ENCODE measurements at regions of chr6 and their contacts with region 1.

Region 1: GRCh38 chr6:87393022-87393622 is 14.7 kb upstream of the CFAP206 start:
- DNase-seq: no peak
- H3K4me3 ChIP-seq: no peak overlapping the region
- H3K27ac ChIP-seq: no peak overlapping the region
- H3K4me1 ChIP-seq: no peaks in the 10 kb centered on the region
- H3K27me3 ChIP-seq: no peaks in the 10 kb centered on the region
- CTCF ChIP-seq: peak in 2 of 3 experiments; percentile 38 to 59; a peak in 2 of 4 replicates
- EP300 ChIP-seq: no peak
- POLR2A ChIP-seq: no peak
- RAD21 ChIP-seq: peak; percentile 70 to 72

Region 2: DNA sequence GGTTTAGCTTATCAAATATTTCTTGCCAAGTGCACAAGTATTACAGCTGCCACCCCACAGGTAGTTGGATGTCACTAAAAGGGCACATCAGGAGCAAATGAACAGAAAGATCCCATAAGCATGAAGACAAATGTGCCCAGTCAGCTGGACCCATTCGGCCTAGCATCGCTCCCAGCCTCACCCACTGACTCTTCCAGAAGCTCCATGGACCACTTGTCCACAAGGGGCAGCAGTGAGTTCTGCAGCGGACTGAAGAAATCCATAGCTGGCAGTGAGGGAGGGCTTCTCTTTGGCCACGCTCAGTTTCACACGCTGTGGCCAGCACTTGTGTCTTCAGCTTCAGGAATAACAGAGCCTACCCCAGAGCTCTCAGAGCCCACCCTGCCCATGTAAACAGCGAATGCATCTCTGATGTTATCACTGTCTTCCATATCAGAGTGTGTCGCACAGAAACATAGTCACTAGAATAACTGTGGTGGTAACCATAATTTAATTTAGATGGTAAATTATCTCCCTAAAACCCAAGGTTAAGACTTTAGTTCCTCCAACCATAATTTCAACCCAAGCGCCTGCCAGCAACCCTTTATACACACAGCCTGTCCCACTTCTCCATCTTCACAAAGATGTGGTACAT is 314.0 kb before region 1 on chr6:
- CTCF ChIA-PET with region 1: interaction called, 10 read pairs
- POLR2A ChIA-PET with region 1: no interaction called
- DNase-seq: peak; percentile 51 to 88
- H3K4me3 ChIP-seq: no peak overlapping the region
- H3K27ac ChIP-seq: no peak overlapping the region
- H3K4me1 ChIP-seq: no peaks in the 10 kb centered on the region
- H3K27me3 ChIP-seq: no peaks in the 10 kb centered on the region
- CTCF ChIP-seq: peak; percentile 84 to 99 (median 97)
- EP300 ChIP-seq: no peak
- POLR2A ChIP-seq: no peak
- RAD21 ChIP-seq: peak; percentile 68 to 78

Region 3: DNA sequence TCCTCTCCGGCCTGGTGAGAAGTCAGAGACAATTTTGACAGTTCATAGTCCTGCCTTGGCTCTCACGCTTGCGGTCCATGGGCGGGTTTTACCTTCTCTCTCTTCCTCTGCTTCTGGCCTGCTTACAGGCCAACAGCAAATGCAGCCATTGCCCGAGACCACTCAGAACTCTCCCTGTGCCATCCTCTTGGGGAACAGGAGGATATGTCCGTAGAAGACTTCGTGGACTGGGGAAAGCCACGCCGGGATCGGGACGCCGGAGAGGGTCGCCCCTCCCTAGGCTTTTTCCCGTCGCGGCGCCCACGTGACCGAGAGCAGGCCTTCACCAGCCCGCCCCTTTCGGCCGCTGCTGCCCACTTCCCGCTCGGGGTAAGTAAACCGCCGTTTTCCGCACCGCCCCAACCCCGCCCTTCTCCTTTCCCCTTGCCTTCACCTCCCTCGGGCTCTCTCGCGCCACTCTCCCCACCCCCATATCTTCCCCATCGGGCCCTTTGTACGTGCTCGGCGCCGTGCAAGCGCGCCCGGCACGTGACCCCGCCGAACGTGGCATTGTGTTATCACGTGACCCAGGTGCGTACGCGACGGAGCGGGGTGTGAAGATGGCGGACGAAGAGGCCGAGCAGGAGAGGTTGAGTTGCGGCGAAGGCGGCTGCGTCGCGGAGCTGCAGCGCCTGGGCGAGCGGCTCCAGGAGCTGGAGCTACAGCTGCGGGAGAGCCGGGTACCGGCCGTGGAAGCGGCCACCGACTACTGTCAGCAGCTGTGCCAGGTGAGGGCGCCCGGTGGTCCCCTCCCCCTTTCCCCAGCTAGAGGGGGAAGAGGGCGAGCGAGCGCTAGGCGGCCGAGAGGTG is 237.9 kb before region 1 on chr6 and contains the start of gene ZNF292:
- CTCF ChIA-PET with region 1: no interaction called
- POLR2A ChIA-PET with region 1: no interaction called
- DNase-seq: peak; percentile 94 to 96
- H3K4me3 ChIP-seq: peak within 1 kb of the TSS; percentile 87 to 97 (median 95)
- H3K27ac ChIP-seq: peak within 1 kb of the TSS; percentile 97
- H3K4me1 ChIP-seq: peaks cover 0 to 8% (median 3%) of the 10 kb centered on the region in 4 experiments; a peak in 4 of 7 replicates
- H3K27me3 ChIP-seq: peaks cover 0 to 9% (median 4%) of the 10 kb centered on the region in 4 experiments; a peak in 3 of 7 replicates
- CTCF ChIP-seq: no peak
- EP300 ChIP-seq: no peak
- POLR2A ChIP-seq: peak; percentile 75 to 85
- RAD21 ChIP-seq: no peak
- total RNA-seq, gene ZNF292: 38.0 and 44.2 TPM in 2 replicates

Region 4: GRCh38 chr6:87277123-87277522 is 116.0 kb before region 1 on chr6:
- CTCF ChIA-PET with region 1: interaction called, 24 read pairs
- POLR2A ChIA-PET with region 1: no interaction called
- DNase-seq: no peak
- H3K4me3 ChIP-seq: no peak overlapping the region
- H3K27ac ChIP-seq: no peak overlapping the region
- H3K4me1 ChIP-seq: no peaks in the 10 kb centered on the region
- H3K27me3 ChIP-seq: no peaks in the 10 kb centered on the region
- CTCF ChIP-seq: peak in 2 of 3 experiments; percentile 4 to 19; a peak in 2 of 4 replicates
- EP300 ChIP-seq: no peak
- POLR2A ChIP-seq: no peak
- RAD21 ChIP-seq: peak; percentile 39 to 45

Region 5: GRCh38 chr6:87333591-87334181 is 59.4 kb before region 1 on chr6:
- CTCF ChIA-PET with region 1: interaction called, 10 read pairs
- POLR2A ChIA-PET with region 1: interaction called, 3 read pairs
- DNase-seq: no peak
- H3K4me3 ChIP-seq: no peak overlapping the region
- H3K27ac ChIP-seq: no peak overlapping the region
- H3K4me1 ChIP-seq: peaks cover 0 to 5% (median 0%) of the 10 kb centered on the region in 4 experiments; a peak in 3 of 7 replicates
- H3K27me3 ChIP-seq: no peaks in the 10 kb centered on the region
- CTCF ChIP-seq: no peak
- EP300 ChIP-seq: no peak
- POLR2A ChIP-seq: no peak
- RAD21 ChIP-seq: no peak

Region 6: GRCh38 chr6:87407901-87408720 is 15.0 kb after region 1 on chr6 and contains the start of gene CFAP206:
- CTCF ChIA-PET with region 1: interaction called, 28 read pairs
- POLR2A ChIA-PET with region 1: no interaction called
- DNase-seq: peak; percentile 56 to 89
- H3K4me3 ChIP-seq: peak within 1 kb of the TSS; percentile 61 to 95 (median 92)
- H3K27ac ChIP-seq: peak within 1 kb of the TSS; percentile 44; the same call in 1 of the 2 replicates
- H3K4me1 ChIP-seq: no peaks in the 10 kb centered on the region
- H3K27me3 ChIP-seq: no peaks in the 10 kb centered on the region
- CTCF ChIP-seq: no peak
- EP300 ChIP-seq: no peak
- POLR2A ChIP-seq: no peak; a peak in 1 of 3 replicates
- RAD21 ChIP-seq: peak; percentile 10 to 15; a peak in 1 of 4 replicates
- total RNA-seq, gene CFAP206: not detected in 2 replicates